BJ (cell line): ENCODE measurements at regions of chr15 and their contacts with region 1.

Region 1: DNA sequence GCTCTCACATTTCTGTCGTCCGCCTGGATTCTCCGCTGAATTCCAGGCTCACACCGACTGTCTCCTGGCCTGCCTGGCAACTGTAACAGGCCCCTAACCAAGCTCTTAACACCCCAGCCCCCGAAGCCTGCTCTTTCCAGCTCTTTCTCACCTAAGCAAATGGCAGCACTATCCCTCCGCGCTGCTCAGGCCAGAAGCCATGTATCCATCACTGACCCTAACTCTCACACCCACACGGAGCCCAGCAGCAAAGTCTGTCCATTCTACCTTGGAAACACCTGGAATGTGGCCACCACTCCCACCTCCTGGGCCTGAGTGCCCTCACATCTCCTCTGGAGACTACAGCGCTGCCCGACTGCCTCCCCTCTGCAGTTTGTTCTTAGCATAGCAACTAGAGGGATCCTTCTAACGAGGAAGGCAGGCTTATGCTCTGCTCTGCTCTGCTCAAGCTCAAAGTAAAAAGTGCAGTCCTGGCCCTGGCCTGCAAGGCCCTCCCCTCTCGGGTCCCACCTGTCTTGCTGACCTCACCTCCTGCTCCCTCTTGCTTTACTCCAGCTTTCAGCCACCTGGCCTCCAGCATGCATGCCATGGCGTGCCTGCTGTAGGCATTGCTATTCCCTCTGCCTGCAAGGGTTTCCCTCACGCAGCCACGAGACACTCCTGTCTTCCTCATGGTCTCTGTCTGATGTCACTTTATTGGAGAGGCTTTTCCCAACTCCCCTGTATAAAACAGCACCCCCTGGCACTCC is 27.2 kb downstream of the FEM1B start:
- DNase-seq: no peak
- H3K4me3 ChIP-seq: no peak overlapping the region
- H3K27me3 ChIP-seq: no peaks in the 10 kb centered on the region
- CTCF ChIP-seq: no peak

Region 2: DNA sequence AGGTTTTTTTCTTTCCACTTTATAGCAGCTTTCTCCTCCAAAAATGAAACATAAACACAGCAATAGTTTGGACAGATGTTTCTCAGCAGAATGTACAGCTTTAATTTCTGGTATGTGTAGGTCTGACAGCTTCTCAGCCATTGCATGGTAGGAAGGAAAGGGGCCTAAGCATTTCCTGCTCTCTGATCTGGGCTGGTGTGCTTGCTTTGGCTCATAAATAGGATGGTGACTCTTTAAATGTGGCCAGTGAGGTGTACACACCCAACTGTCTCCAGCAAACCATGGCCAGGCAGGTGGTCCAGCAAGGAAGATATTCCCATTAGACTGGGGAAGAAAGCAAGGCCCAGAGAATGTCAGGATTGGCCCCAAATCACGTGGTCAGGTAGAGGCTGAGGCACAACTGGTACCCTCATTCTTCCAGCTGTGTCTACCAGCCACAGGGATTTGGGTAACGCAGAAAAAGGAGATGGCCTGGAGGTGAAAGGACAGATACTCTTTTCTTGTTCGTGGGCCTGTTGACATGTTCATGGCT is 75.1 kb after region 1 on chr15:
- CTCF ChIA-PET with region 1: interaction called, 11 read pairs
- POLR2A ChIA-PET with region 1: no interaction called
- DNase-seq: no peak
- H3K4me3 ChIP-seq: no peak overlapping the region
- H3K27me3 ChIP-seq: no peaks in the 10 kb centered on the region
- CTCF ChIP-seq: no peak